ENCODE measurements at regions of chr3 and their contacts with region 1.

Region 1: DNA sequence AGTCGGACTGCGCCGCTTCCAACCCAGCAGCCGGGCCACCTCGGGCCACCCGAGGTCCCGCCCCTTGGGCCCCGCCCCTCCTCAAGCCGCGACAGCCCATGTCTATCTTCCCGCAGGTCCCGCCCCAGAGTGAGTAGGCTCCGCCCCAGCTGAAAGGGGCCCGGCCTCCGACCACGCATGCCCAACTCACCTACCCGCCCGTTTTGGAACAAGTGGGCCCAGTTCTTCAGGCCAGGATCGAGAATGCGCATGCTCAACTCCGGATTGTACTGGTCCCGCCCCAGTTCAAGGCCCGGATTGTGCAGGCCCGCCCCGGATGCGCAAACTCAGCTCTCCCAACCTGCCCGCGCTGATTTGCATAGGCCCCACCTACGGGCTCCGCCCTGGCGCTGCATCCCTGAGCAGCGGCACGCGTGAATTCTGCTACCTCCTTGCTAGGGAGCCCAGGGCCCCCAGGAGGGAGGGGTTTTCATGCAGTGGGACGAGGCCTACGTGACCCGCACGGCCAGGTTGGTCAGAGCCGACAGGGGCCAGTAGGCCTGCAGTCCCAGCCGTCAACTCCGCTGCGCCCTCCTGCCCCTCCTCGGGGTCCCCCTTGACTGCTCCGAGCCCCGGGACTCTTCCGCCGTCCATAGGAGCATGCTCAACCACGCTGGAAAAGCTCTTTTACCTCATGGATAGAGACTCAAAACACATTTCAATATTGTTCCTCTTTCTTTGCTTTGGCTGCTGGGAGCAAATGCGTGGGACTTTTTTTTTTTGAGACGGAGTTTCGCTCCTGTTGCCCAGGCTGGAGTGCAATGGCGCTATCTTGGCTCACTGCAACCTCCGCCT is at the start of gene PFKFB4:
- DNase-seq: peak; percentile 98
- ATAC-seq: peak; percentile 89
- H3K4me3 Mint-ChIP-seq: peak within 1 kb of the TSS; percentile 86
- H3K27ac Mint-ChIP-seq: peak within 1 kb of the TSS; percentile 87
- H3K4me1 Mint-ChIP-seq: peaks cover 33% of the 10 kb centered on the region
- H3K27me3 Mint-ChIP-seq: no peaks in the 10 kb centered on the region
- CTCF ChIP-seq: no peak
- total RNA-seq, gene PFKFB4: 2.0 and 3.2 TPM in 2 replicates

Region 2: DNA sequence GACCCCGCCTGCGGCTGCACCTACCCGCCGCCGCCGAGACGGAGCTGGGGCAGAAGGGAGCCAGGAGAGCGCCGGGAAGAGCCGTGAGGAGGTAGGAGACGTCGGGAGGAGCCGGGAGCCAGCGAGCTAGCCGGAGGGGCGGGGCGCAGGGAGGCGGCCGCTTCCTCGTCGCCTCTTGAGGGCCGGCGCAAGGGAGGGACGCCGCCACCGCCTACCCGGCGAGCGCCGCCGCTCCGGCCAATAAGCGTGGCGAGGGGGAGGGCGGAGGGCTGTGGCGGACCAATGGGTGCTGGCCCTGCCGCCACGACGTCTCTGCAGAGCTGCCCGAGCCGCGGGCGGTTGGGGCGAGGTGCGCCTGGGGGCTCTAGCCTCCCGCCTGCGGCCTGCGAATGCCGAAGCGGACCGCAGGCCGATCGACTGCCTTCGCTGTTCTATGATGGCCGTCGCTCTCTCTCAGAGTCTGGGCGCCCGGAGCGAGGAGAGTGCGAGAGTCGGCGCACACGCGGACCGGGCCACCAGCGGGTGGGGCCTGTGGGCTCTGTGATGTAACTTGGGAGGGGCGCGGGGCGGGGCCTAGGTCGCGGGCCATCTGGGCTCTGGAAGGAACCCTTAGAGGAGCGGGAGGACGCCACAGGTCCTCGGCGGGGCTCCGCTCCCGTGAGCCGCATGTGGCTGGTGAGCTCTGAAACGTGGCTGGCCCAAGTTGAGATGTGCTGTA is 468.1 kb before region 1 on chr3:
- CTCF ChIA-PET with region 1: no interaction called
- POLR2A ChIA-PET with region 1: no interaction called
- intact Hi-C with region 1: loop called (anchors 2 kb)
- DNase-seq: peak; percentile 95
- ATAC-seq: peak; percentile 92
- H3K4me3 Mint-ChIP-seq: peak overlapping the region; percentile 97
- H3K27ac Mint-ChIP-seq: peak overlapping the region; percentile 97
- H3K4me1 Mint-ChIP-seq: peaks cover 29% of the 10 kb centered on the region
- H3K27me3 Mint-ChIP-seq: no peaks in the 10 kb centered on the region
- CTCF ChIP-seq: no peak

Region 3: GRCh38 chr3:48400824-48401433 is 156.1 kb before region 1 on chr3:
- CTCF ChIA-PET with region 1: interaction called, 20 read pairs
- POLR2A ChIA-PET with region 1: interaction called, 3 read pairs
- intact Hi-C with region 1: no loop called
- DNase-seq: peak; percentile 24
- ATAC-seq: peak; percentile 94
- H3K4me3 Mint-ChIP-seq: no peak overlapping the region
- H3K27ac Mint-ChIP-seq: no peak overlapping the region
- H3K4me1 Mint-ChIP-seq: no peaks in the 10 kb centered on the region
- H3K27me3 Mint-ChIP-seq: peaks cover under 1% of the 10 kb centered on the region
- CTCF ChIP-seq: peak; percentile 41

Region 4: GRCh38 chr3:48507351-48508061 is 49.5 kb before region 1 on chr3:
- CTCF ChIA-PET with region 1: interaction called, 3 read pairs
- POLR2A ChIA-PET with region 1: no interaction called
- intact Hi-C with region 1: loop called (anchors 2 kb)
- DNase-seq: peak; percentile 56
- ATAC-seq: peak; percentile 88
- H3K4me3 Mint-ChIP-seq: peak overlapping the region; percentile 24
- H3K27ac Mint-ChIP-seq: no peak overlapping the region
- H3K4me1 Mint-ChIP-seq: peaks cover 15% of the 10 kb centered on the region
- H3K27me3 Mint-ChIP-seq: no peaks in the 10 kb centered on the region
- CTCF ChIP-seq: peak; percentile 28

Region 5: DNA sequence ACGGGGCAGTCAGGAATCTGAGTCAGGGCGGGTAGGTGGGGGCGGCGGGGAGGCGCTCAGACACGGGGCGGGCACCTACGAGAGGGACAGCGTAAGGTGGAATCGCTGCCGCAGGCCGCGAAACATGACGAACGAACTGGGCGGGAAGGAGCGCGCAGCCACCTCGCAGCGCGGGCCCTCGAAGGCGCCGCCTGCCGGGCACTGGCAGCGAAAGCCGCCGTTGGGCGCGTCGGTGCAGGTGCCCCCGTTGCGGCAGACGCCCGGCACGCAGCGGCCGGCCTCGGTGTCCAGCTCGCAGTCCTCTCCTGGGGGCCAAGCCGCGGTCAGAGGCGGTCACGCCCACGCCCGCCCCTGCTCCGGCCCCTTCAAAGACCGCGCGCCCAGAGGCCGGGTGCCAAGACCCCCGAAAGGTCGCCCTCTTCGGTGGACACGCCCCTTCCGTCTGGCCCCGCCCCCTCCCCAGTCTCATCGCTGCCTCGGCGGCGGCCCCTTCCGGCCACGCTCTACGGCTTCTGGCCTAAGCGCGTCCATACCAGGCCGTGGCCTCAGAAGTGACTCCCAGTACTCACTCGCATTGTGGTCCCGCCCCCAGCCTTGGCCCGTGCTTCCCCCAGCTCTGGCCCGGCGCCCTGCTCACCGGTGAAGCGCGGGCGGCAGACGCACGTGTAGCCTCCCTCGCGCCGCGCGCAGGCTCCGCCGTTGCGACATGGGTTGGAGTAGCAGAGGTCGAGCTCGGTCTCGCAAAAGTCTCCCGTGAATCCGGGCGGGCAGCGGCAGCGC is 99.2 kb after region 1 on chr3:
- CTCF ChIA-PET with region 1: no interaction called
- POLR2A ChIA-PET with region 1: no interaction called
- intact Hi-C with region 1: loop called (anchors 2 kb)
- DNase-seq: peak; percentile 83
- ATAC-seq: peak; percentile 85
- H3K4me3 Mint-ChIP-seq: peak overlapping the region; percentile 78
- H3K27ac Mint-ChIP-seq: no peak overlapping the region
- H3K4me1 Mint-ChIP-seq: peaks cover 14% of the 10 kb centered on the region
- H3K27me3 Mint-ChIP-seq: peaks cover 11% of the 10 kb centered on the region
- CTCF ChIP-seq: no peak

Region 6: DNA sequence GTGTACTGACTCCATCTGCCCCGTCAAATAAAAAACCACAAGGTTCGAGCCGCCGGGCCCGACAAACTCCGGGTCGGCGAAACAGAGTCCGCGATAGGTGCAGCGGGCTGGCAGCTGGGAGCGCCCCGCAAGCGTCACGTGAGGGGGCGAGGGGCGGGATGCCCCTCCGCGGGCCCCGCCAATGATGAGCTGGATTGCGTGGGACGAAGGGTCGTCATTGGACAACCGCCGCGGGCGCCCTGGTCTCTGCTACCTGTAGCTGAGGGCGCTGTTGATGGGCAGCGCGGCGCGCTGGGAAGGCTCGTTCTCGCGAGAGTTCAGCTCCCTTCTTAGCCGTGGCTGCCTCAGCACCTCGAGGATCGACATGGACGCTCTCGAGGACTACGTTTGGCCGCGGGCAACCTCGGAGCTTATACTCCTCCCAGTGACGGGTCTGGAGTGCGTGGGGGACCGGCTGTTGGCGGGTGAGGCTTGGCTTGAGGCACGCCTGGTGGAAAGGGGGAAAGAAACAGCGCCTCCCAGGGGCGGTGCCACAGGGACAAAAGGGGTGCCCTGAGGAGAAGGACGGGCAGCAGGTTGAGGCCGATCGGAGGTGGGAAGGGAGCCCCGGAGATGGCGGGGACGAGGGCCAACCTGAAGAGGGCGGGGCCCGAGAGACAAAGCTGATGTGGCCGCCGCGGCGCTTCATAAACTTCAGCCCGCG is 450.2 kb after region 1 on chr3 and contains the start of gene WDR6:
- CTCF ChIA-PET with region 1: no interaction called
- POLR2A ChIA-PET with region 1: interaction called, 3 read pairs
- intact Hi-C with region 1: loop called (anchors 5 kb)
- DNase-seq: peak; percentile 91
- ATAC-seq: peak; percentile 89
- H3K4me3 Mint-ChIP-seq: peak within 1 kb of the TSS; percentile 100
- H3K27ac Mint-ChIP-seq: peak within 1 kb of the TSS; percentile 99
- H3K4me1 Mint-ChIP-seq: peaks cover 21% of the 10 kb centered on the region
- H3K27me3 Mint-ChIP-seq: no peaks in the 10 kb centered on the region
- CTCF ChIP-seq: no peak
- total RNA-seq, gene WDR6: 205 and 250 TPM in 2 replicates

Region 7: GRCh38 chr3:49786241-49786958 is 1229.4 kb after region 1 on chr3 and contains the start of gene IP6K1:
- CTCF ChIA-PET with region 1: no interaction called
- POLR2A ChIA-PET with region 1: no interaction called
- intact Hi-C with region 1: loop called (anchors 2 kb)
- DNase-seq: peak; percentile 97
- ATAC-seq: peak; percentile 99
- H3K4me3 Mint-ChIP-seq: peak within 1 kb of the TSS; percentile 91
- H3K27ac Mint-ChIP-seq: peak within 1 kb of the TSS; percentile 93
- H3K4me1 Mint-ChIP-seq: peaks cover 32% of the 10 kb centered on the region
- H3K27me3 Mint-ChIP-seq: no peaks in the 10 kb centered on the region
- CTCF ChIP-seq: no peak
- total RNA-seq, gene IP6K1: 44.3 and 47.6 TPM in 2 replicates

Measured in activated B cell treated with CpG ODN at 0.5 μM for 24 hours (primary cell).